ENCODE measurements at regions of chr2 and their contacts with region 1.

Region 1: DNA sequence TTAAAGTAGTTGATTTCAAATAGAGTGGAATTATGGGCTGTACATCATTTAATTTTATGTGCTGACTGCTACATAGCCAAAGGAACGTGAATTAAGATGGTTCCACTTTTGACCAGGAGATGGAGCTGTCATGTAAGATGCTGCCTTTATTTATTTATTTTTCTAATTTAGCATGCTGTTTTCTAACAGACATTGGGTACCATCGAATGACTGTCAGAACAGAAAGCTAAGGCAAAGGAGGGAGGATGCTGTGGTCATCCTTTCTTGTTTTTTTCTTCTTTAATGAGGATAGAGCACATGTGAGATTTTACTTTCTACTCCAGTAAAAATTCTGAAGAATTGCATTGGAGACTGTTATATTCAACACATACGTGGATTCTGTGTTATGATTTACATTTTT is at the start of gene SCN2A:
- DNase-seq: peak in 3 of 9 donors; percentile 1 to 5 (median 1)
- ATAC-seq: no peak
- H3K4me3 ChIP-seq: no peak within 1 kb of the TSS
- H3K4me3 Mint-ChIP-seq: no peak within 1 kb of the TSS
- H3K27ac ChIP-seq: no peak within 1 kb of the TSS
- H3K27ac Mint-ChIP-seq: no peak within 1 kb of the TSS
- H3K4me1 ChIP-seq: no peaks in the 10 kb centered on the region
- H3K4me1 Mint-ChIP-seq: no peaks in the 10 kb centered on the region
- H3K27me3 ChIP-seq: peaks cover 0 to 3% of the 10 kb centered on the region in 2 donors
- H3K27me3 Mint-ChIP-seq: peaks cover 0 to 9% (median 0%) of the 10 kb centered on the region in 5 donors
- total RNA-seq, gene SCN2A: not detected

Region 2: DNA sequence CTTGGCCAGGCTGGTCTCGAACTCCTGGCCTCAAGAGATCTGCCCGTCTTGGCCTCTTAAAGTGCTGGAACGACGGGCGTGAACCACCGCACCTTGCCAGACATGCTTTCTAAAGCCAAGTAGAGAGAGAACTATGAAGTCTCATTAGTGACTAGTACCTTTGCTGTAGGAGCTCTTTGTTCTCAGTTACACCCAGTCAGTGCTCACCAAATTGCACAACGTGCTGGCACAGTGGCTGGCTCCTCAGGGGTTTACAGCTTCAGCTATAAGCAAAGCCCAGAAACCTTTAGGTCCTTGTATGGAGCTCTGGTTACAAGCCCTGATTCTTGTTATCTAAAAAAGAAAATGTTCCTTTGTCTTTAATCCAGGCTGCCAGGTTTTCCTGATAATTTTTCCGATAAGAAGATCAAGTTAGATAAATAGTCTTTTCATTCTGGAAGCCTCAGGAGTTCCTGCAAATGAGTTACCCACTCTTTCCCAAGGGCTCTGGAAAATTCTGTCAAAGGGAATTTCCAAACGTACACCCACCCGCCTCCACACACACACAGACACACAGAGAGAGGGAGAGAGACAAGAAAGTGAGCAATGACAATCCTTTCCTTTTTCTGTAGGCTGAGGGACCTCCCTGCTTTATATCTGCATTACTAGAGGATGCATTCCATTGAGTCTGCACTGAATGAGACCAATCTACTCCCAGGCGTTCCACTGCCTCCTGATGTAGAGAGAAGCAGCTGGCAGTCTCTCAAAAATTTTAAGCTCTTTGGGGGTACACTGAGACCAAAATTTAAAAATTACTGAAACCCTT is 130.1 kb after region 1 on chr2:
- CTCF ChIA-PET with region 1: no interaction called
- POLR2A ChIA-PET with region 1: no interaction called
- intact Hi-C with region 1: no loop called
- DNase-seq: no peak
- ATAC-seq: no peak
- H3K4me3 ChIP-seq: no peak overlapping the region
- H3K4me3 Mint-ChIP-seq: no peak overlapping the region
- H3K27ac ChIP-seq: no peak overlapping the region
- H3K27ac Mint-ChIP-seq: no peak overlapping the region
- H3K4me1 ChIP-seq: no peaks in the 10 kb centered on the region
- H3K4me1 Mint-ChIP-seq: no peaks in the 10 kb centered on the region
- H3K27me3 ChIP-seq: no peaks in the 10 kb centered on the region
- H3K27me3 Mint-ChIP-seq: no peaks in the 10 kb centered on the region

Region 3: DNA sequence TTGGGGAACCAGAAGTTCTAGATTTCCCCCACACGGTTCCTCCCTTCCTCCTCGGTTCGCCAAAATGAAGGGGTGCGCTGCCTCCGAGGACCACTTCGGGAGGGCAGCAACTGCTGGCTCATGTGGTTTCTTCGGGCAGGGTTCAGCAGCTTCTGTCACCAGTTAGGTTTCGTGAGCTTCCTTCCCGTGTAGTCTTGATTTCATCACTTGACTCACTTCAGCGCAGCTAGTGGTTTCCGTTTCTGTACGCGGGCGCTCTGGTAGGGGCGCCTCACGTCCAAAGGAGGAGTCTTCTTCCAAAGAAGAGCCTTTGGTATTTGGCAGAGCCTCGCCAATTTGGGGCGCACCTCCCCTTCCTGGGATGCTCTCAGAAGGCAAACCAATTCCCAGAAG is 555.3 kb after region 1 on chr2:
- CTCF ChIA-PET with region 1: no interaction called
- POLR2A ChIA-PET with region 1: no interaction called
- intact Hi-C with region 1: loop called in 1 of 2 experiments (anchors 10 kb)
- DNase-seq: peak in 6 of 9 donors; percentile 25 to 65 (median 32)
- ATAC-seq: peak; percentile 91
- H3K4me3 ChIP-seq: peak overlapping the region; percentile 58
- H3K4me3 Mint-ChIP-seq: peak overlapping the region; percentile 85 to 97 (median 88)
- H3K27ac ChIP-seq: no peak overlapping the region
- H3K27ac Mint-ChIP-seq: peak overlapping the region in 5 of 9 donors; percentile 21 to 97 (median 44)
- H3K4me1 ChIP-seq: peaks cover 0 to 6% of the 10 kb centered on the region in 2 donors
- H3K4me1 Mint-ChIP-seq: peaks cover 14 to 42% (median 20%) of the 10 kb centered on the region in 7 donors
- H3K27me3 ChIP-seq: peaks cover 0 to 7% of the 10 kb centered on the region in 2 donors
- H3K27me3 Mint-ChIP-seq: peaks cover 12 to 46% (median 37%) of the 10 kb centered on the region in 5 donors